ENCODE measurements at regions of chr12 and their contacts with region 1.

Region 1: DNA sequence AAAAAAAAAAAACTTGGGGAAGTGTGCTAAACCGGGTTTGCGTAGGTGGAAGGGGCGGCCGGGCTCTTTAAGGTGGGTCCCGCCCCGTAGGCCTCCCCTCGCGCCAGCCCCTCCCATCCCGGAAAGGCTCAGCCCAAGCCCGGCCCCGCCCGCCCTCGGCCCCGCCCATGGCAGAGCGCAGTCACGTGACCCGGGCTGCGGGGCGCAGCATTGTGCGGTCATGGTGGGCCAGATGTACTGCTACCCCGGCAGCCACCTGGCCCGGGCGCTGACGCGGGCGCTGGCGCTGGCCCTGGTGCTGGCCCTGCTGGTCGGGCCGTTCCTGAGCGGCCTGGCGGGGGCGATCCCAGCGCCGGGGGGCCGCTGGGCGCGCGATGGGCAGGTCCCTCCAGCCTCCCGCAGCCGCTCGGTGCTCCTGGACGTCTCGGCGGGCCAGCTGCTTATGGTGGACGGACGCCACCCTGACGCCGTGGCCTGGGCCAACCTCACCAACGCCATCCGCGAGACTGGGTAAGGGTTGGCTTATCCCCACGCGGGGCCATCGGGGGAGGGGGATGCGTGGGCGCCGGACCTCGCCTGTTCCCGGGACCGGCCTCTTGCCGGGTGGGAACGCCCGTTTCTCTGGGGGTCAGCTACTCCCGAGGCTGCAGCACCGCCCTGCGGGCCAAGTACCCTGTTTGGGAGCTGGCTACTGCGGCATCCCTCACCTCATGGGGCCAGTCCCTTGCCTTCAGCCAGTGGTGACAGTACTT is at the start of gene PLBD2:
- DNase-seq: peak; percentile 87
- H3K4me3 ChIP-seq: peak within 1 kb of the TSS; percentile 64 to 94 (median 72)
- H3K27ac ChIP-seq: peak within 1 kb of the TSS; percentile 18
- H3K4me1 ChIP-seq: peaks cover 10% of the 10 kb centered on the region
- H3K27me3 ChIP-seq: no peaks in the 10 kb centered on the region
- CTCF ChIP-seq: no peak
- total RNA-seq, gene PLBD2: 41.8 to 42.8 TPM

Region 2: GRCh38 chr12:113247123-113248055 is 111.2 kb before region 1 on chr12:
- CTCF ChIA-PET with region 1: no interaction called
- dilution Hi-C with region 1: no loop called
- in situ Hi-C with region 1: no loop called
- intact Hi-C with region 1: loop called (anchors 2 kb)
- DNase-seq: peak; percentile 48
- H3K4me3 ChIP-seq: no peak overlapping the region
- H3K27ac ChIP-seq: peak overlapping the region; percentile 96
- H3K4me1 ChIP-seq: peaks cover 49% of the 10 kb centered on the region
- H3K27me3 ChIP-seq: no peaks in the 10 kb centered on the region
- CTCF ChIP-seq: no peak

Region 3: DNA sequence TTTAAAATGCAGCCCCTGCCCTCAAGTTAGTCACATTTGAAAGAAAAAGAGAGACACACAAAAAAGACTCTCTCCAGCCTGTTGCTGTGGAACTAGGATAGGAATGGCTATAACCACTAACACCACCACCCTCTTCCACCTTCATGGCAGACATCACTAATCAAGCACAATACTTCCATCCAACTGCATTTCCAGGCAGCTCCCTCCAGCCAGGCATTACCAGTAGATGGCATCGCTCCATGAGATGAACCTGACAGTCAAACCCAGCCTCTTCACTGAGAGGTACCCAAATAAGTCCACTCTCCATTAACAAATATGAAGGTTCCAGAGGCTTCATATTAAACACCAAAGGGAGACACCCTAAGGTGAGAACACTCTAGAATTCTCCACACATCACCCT is 48.1 kb before region 1 on chr12:
- CTCF ChIA-PET with region 1: no interaction called
- dilution Hi-C with region 1: no loop called
- in situ Hi-C with region 1: no loop called
- intact Hi-C with region 1: loop called (anchors 1 kb)
- DNase-seq: peak; percentile 32
- H3K4me3 ChIP-seq: no peak overlapping the region
- H3K27ac ChIP-seq: no peak overlapping the region
- H3K4me1 ChIP-seq: no peaks in the 10 kb centered on the region
- H3K27me3 ChIP-seq: no peaks in the 10 kb centered on the region
- CTCF ChIP-seq: peak in 1 of 2 donors; percentile 15

Region 4: DNA sequence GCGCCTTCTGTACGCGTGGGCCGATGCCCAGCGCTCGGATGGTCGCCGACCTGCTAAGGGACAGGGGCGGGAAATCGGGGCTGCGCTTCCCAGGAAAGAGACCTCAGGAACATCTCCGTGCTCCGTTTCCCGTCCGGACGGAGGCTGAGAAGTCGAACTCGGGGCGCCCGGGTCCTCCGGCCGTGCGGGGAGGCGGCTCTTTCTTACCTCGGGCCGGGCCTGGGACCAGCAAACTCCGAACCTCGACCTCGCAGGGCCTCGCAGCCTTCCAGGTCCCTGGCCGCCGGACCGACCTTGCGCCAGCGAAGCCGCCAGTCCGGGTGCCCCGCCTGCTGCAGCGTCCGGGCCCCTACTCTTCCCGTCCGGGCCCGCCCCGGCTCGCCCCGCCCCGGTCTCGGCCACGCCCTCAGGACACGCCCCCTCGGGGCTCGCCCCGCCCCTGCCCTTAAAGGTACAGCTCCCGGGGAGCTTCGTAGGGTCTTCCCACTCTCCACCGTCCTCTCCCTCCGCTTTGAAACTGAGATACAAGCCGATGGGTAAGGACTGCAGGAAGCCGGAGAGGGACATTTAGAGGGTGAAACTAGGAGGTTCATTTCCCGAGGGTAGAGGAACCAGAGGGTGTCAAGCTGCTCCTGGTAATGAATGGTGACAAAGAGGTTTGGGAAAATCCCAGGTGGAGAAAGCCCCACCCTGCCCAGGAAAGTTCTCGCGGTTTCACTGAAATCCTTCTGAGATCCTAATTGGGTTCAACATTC is 23.6 kb before region 1 on chr12 and contains the start of gene SLC8B1:
- CTCF ChIA-PET with region 1: no interaction called
- dilution Hi-C with region 1: no loop called
- in situ Hi-C with region 1: no loop called
- intact Hi-C with region 1: loop called (anchors 1 kb)
- DNase-seq: peak; percentile 78
- H3K4me3 ChIP-seq: peak within 1 kb of the TSS; percentile 70 to 85 (median 80)
- H3K27ac ChIP-seq: peak within 1 kb of the TSS; percentile 45
- H3K4me1 ChIP-seq: peaks cover 10% of the 10 kb centered on the region
- H3K27me3 ChIP-seq: no peaks in the 10 kb centered on the region
- CTCF ChIP-seq: no peak
- total RNA-seq, gene SLC8B1: 11.7 to 16.1 TPM

Region 5: GRCh38 chr12:114403011-114403689 is 1044.6 kb after region 1 on chr12:
- CTCF ChIA-PET with region 1: no interaction called
- dilution Hi-C with region 1: no loop called
- in situ Hi-C with region 1: no loop called
- intact Hi-C with region 1: no loop called
- DNase-seq: no peak
- H3K4me3 ChIP-seq: no peak overlapping the region
- H3K27ac ChIP-seq: no peak overlapping the region
- H3K4me1 ChIP-seq: no peaks in the 10 kb centered on the region
- H3K27me3 ChIP-seq: peaks cover 71% of the 10 kb centered on the region
- CTCF ChIP-seq: no peak

Measured in mammary epithelial cell (primary cell).